ENCODE measurements at regions of chr20 and their contacts with region 1.

Region 1: GRCh38 chr20:61629602-61630390 is 377.7 kb downstream of the CDH4 start:
- DNase-seq: no peak
- H3K4me3 ChIP-seq: no peak overlapping the region
- H3K4me3 Mint-ChIP-seq: no peak overlapping the region
- H3K27ac Mint-ChIP-seq: no peak overlapping the region
- H3K4me1 ChIP-seq: no peaks in the 10 kb centered on the region
- H3K4me1 Mint-ChIP-seq: no peaks in the 10 kb centered on the region
- H3K27me3 ChIP-seq: no peaks in the 10 kb centered on the region
- H3K27me3 Mint-ChIP-seq: peaks cover 44% of the 10 kb centered on the region
- CTCF ChIP-seq: no peak

Region 2: GRCh38 chr20:61584851-61585250 is 44.9 kb before region 1 on chr20:
- CTCF ChIA-PET with region 1: no interaction called
- POLR2A ChIA-PET with region 1: no interaction called
- intact Hi-C with region 1: loop called (anchors 1 kb)
- DNase-seq: no peak
- H3K4me3 ChIP-seq: no peak overlapping the region
- H3K4me3 Mint-ChIP-seq: no peak overlapping the region
- H3K27ac Mint-ChIP-seq: no peak overlapping the region
- H3K4me1 ChIP-seq: no peaks in the 10 kb centered on the region
- H3K4me1 Mint-ChIP-seq: no peaks in the 10 kb centered on the region
- H3K27me3 ChIP-seq: no peaks in the 10 kb centered on the region; the same call in 1 of the 2 replicates
- H3K27me3 Mint-ChIP-seq: peaks cover 21% of the 10 kb centered on the region
- CTCF ChIP-seq: no peak